ENCODE measurements at regions of chr12 and their contacts with region 1.

Region 1: GRCh38 chr12:102061560-102062418 is at the start of gene WASHC3:
- DNase-seq: peak; percentile 98
- ATAC-seq: peak; percentile 97
- H3K4me3 ChIP-seq: peak within 1 kb of the TSS; percentile 86
- H3K27ac ChIP-seq: peak within 1 kb of the TSS; percentile 0; the same call in 1 of the 2 replicates
- H3K4me1 ChIP-seq: peaks cover 5% of the 10 kb centered on the region; the same call in 1 of the 2 replicates
- H3K27me3 ChIP-seq: no peaks in the 10 kb centered on the region
- CTCF ChIP-seq: no peak
- total RNA-seq, gene WASHC3: 24.9 and 34.4 TPM in 2 replicates

Region 2: DNA sequence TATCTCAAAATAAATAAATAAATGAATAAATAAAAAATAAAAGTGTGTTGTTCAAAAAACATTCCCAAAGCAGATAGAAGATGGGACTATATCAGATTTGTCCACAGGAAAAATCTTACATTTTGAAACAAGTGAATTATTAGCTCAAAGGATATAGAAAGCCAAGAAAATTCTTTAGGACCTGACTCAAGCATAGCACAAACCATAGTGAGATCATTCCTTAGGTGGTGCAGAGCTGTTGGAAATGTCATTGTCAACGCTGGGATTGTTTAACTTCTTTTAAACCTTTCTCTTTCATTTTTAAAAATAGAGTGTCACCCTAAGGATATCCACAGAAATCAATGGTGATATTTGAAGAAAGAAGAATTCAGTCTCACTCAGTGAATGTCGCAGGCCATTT is 140.9 kb before region 1 on chr12:
- CTCF ChIA-PET with region 1: no interaction called
- POLR2A ChIA-PET with region 1: no interaction called
- intact Hi-C with region 1: loop called (anchors 1 kb)
- DNase-seq: no peak
- ATAC-seq: no peak
- H3K4me3 ChIP-seq: no peak overlapping the region
- H3K27ac ChIP-seq: no peak overlapping the region
- H3K4me1 ChIP-seq: peaks cover 11% of the 10 kb centered on the region
- H3K27me3 ChIP-seq: no peaks in the 10 kb centered on the region
- CTCF ChIP-seq: no peak

Region 3: DNA sequence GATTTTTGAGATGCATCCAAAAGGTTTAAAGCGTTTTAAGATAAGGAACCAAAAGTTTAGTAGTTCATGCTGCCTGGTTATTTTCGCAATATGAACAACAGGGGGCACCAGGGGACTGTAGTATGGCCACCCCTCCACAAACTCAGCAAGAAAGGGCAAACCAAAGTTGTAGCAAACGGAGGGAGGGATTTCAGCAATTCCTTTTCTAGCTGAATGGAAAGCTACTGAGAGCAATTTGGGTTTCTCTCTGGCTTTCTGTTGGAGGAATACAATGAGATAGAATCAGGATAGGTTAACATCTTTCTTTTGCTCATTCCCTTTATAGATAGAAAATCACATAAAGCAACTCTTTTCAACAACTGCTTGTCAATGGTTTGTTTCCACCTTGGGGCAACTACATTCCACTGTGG is 121.9 kb before region 1 on chr12:
- CTCF ChIA-PET with region 1: no interaction called
- POLR2A ChIA-PET with region 1: interaction called, 3 read pairs
- intact Hi-C with region 1: loop called (anchors 2 kb)
- DNase-seq: peak; percentile 77
- ATAC-seq: peak; percentile 78
- H3K4me3 ChIP-seq: no peak overlapping the region
- H3K27ac ChIP-seq: no peak overlapping the region
- H3K4me1 ChIP-seq: no peaks in the 10 kb centered on the region
- H3K27me3 ChIP-seq: peaks cover 22% of the 10 kb centered on the region
- CTCF ChIP-seq: peak; percentile 93

Region 4: GRCh38 chr12:102033991-102034745 is 27.6 kb before region 1 on chr12:
- CTCF ChIA-PET with region 1: no interaction called
- POLR2A ChIA-PET with region 1: no interaction called
- intact Hi-C with region 1: loop called (anchors 2 kb)
- DNase-seq: peak; percentile 50
- ATAC-seq: peak; percentile 86
- H3K4me3 ChIP-seq: no peak overlapping the region
- H3K27ac ChIP-seq: no peak overlapping the region
- H3K4me1 ChIP-seq: 0 out of 2 replicates have a peak, but pooled peaks cover 4% of the 10 kb centered on the region
- H3K27me3 ChIP-seq: no peaks in the 10 kb centered on the region
- CTCF ChIP-seq: no peak

Region 5: GRCh38 chr12:102119674-102120563 is 58.1 kb after region 1 on chr12 and contains the starts of genes NUP37 and PARPBP:
- CTCF ChIA-PET with region 1: no interaction called
- POLR2A ChIA-PET with region 1: no interaction called
- intact Hi-C with region 1: loop called (anchors 1 kb)
- DNase-seq: peak; percentile 96
- ATAC-seq: peak; percentile 90
- H3K4me3 ChIP-seq: peak within 1 kb of the TSS; percentile 98
- H3K27ac ChIP-seq: peak within 1 kb of the TSS; percentile 85
- H3K4me1 ChIP-seq: peaks cover 28% of the 10 kb centered on the region
- H3K27me3 ChIP-seq: no peaks in the 10 kb centered on the region
- CTCF ChIP-seq: no peak
- total RNA-seq, gene NUP37: 81.6 and 84.3 TPM in 2 replicates
- total RNA-seq, gene PARPBP: 22.5 and 23.0 TPM in 2 replicates

Measured in PC-3 (cell line).